ENCODE measurements at regions of chr2 and their contacts with region 1.

Region 1: GRCh38 chr2:69858261-69858660 is 28.8 kb downstream of the GMCL1 start:
- DNase-seq: no peak
- ATAC-seq: no peak
- H3K4me3 ChIP-seq: no peak overlapping the region
- H3K4me3 Mint-ChIP-seq: no peak overlapping the region
- H3K27ac ChIP-seq: no peak overlapping the region
- H3K27ac Mint-ChIP-seq: no peak overlapping the region
- H3K4me1 ChIP-seq: no peaks in the 10 kb centered on the region
- H3K4me1 Mint-ChIP-seq: no peaks in the 10 kb centered on the region
- H3K27me3 ChIP-seq: no peaks in the 10 kb centered on the region
- H3K27me3 Mint-ChIP-seq: no peaks in the 10 kb centered on the region

Region 2: DNA sequence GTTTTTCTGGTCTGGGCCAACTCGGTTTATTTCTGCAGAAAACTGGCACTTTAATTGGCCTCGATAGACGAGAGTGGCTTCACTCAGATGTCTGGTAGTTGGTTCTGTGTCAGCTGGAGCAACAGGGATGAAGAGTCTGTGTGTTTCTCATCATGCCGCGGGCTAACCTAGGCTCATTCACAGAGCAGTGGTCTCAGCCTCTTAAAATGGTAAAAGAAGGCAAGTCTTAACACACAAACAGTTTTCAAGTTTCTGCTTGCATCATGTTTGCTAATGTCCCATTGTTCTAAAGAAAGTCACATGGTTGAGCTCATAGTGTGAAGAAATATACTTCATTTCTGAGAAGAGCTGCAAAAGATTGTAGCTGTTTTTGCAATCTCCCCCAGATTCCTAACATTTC is 153.8 kb before region 1 on chr2:
- CTCF ChIA-PET with region 1: no interaction called
- POLR2A ChIA-PET with region 1: no interaction called
- DNase-seq: no peak
- ATAC-seq: no peak
- H3K4me3 ChIP-seq: no peak overlapping the region
- H3K4me3 Mint-ChIP-seq: no peak overlapping the region
- H3K27ac ChIP-seq: no peak overlapping the region
- H3K27ac Mint-ChIP-seq: no peak overlapping the region
- H3K4me1 ChIP-seq: peaks cover 0 to under 1% of the 10 kb centered on the region in 2 experiments
- H3K4me1 Mint-ChIP-seq: peaks cover 9 to 16% (median 16%) of the 10 kb centered on the region in 3 donors
- H3K27me3 ChIP-seq: no peaks in the 10 kb centered on the region
- H3K27me3 Mint-ChIP-seq: no peaks in the 10 kb centered on the region

Region 3: GRCh38 chr2:70934981-70935380 is 1076.7 kb after region 1 on chr2:
- CTCF ChIA-PET with region 1: no interaction called
- POLR2A ChIA-PET with region 1: interaction called in 1 of 2 experiments, 12 read pairs
- DNase-seq: no peak
- ATAC-seq: no peak
- H3K4me3 ChIP-seq: no peak overlapping the region
- H3K4me3 Mint-ChIP-seq: no peak overlapping the region
- H3K27ac ChIP-seq: no peak overlapping the region
- H3K27ac Mint-ChIP-seq: no peak overlapping the region
- H3K4me1 ChIP-seq: no peaks in the 10 kb centered on the region
- H3K4me1 Mint-ChIP-seq: no peaks in the 10 kb centered on the region
- H3K27me3 ChIP-seq: peaks cover 0 to 55% of the 10 kb centered on the region in 2 experiments
- H3K27me3 Mint-ChIP-seq: peaks cover 9 to 23% of the 10 kb centered on the region in 2 donors

Measured in T-cell (primary cell).